ENCODE measurements at regions of chr12 and their contacts with region 1.

Region 1: DNA sequence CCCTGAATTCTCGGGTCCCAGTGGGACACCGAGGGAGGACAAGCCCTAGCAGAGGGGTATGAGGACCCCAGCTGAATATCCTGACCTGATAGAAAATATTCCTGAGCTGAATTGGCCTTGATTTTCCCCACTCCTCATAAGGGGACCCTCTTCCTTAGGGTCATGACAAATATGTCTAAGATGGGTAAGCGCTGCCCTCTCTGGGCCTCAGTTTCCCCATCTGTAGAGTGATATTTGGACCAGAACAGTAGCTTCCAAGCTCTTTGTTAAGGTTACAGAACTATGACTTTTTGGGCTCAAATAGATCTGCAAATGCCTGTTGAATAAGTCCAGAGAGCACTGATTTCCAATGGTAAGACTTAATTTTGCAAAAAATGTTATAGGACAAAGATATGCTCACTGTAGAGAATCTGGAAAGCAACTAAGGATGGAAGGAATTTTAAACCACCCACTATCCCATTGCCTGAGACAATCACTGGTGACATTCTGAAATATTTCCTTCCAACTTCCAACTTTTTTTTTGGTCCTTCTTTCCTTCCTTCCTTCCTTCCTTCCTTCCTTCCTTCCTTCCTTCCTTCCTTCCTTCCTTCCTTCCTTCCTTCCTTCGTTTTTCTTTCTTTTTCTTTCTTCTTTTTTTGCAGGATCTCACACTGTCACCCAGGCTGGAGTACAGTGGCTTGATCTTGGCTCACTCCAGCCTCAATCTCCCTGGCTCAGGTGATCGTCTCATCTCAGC is 32.0 kb downstream of the MYL2 start:
- DNase-seq: no peak
- H3K4me3 ChIP-seq: no peak overlapping the region
- H3K27ac ChIP-seq: no peak overlapping the region
- H3K4me1 ChIP-seq: peaks cover 9% of the 10 kb centered on the region
- H3K27me3 ChIP-seq: no peaks in the 10 kb centered on the region
- CTCF ChIP-seq: no peak

Region 2: GRCh38 chr12:110513842-110514241 is 374.6 kb before region 1 on chr12:
- CTCF ChIA-PET with region 1: no interaction called
- dilution Hi-C with region 1: no loop called
- in situ Hi-C with region 1: no loop called
- intact Hi-C with region 1: loop called (anchors 10 kb)
- DNase-seq: no peak
- H3K4me3 ChIP-seq: no peak overlapping the region
- H3K27ac ChIP-seq: no peak overlapping the region
- H3K4me1 ChIP-seq: no peaks in the 10 kb centered on the region
- H3K27me3 ChIP-seq: no peaks in the 10 kb centered on the region
- CTCF ChIP-seq: no peak

Region 3: GRCh38 chr12:110704748-110705147 is 183.7 kb before region 1 on chr12:
- CTCF ChIA-PET with region 1: interaction called, 6 read pairs
- dilution Hi-C with region 1: no loop called
- in situ Hi-C with region 1: no loop called
- intact Hi-C with region 1: loop called (anchors 1 kb)
- DNase-seq: peak; percentile 24
- H3K4me3 ChIP-seq: no peak overlapping the region
- H3K27ac ChIP-seq: no peak overlapping the region
- H3K4me1 ChIP-seq: no peaks in the 10 kb centered on the region
- H3K27me3 ChIP-seq: no peaks in the 10 kb centered on the region
- CTCF ChIP-seq: peak; percentile 39 to 75

Region 4: GRCh38 chr12:110742718-110743570 is 145.5 kb before region 1 on chr12 and contains the start of gene PPP1CC:
- CTCF ChIA-PET with region 1: interaction called, 6 read pairs
- dilution Hi-C with region 1: no loop called
- in situ Hi-C with region 1: no loop called
- intact Hi-C with region 1: loop called (anchors 2 kb)
- DNase-seq: peak; percentile 90
- H3K4me3 ChIP-seq: peak within 1 kb of the TSS; percentile 69 to 85 (median 79)
- H3K27ac ChIP-seq: peak within 1 kb of the TSS; percentile 71
- H3K4me1 ChIP-seq: peaks cover 35% of the 10 kb centered on the region
- H3K27me3 ChIP-seq: no peaks in the 10 kb centered on the region
- CTCF ChIP-seq: no peak
- total RNA-seq, gene PPP1CC: 91.0 to 116 TPM

Region 5: DNA sequence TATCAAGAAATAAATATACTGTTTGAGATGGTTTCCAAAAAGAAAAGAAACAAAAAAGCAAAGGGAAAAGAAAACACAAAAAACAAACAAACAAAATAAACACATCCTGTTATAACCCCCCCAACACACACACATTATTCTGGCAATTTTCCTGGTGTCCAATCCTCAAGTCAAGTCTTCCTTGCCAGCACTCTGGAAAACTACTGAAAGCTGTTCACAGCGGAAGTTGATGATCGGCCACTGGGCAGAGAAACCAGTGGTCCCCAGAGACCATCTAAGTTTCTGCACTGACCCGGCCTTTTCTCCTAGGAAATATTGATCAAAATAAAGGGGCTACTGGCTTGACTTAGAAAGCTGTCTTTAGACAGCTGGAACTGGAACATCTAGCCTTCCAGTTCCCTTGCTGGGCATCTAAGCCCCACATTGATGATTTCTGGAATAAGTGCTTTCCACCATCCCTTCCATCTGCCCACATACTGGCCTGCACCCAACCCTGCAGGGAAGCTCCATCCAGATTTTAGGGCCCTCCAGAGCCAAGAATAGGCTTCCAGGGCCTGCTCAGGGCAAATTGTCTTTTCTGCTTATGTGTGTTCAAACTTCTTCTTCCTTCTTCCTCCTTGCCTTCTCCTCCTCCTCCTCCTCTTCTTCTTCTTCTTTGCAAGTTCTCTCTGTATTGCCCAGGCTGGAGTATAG is 134.2 kb before region 1 on chr12:
- CTCF ChIA-PET with region 1: no interaction called
- dilution Hi-C with region 1: no loop called
- in situ Hi-C with region 1: no loop called
- intact Hi-C with region 1: no loop called
- DNase-seq: no peak
- H3K4me3 ChIP-seq: no peak overlapping the region
- H3K27ac ChIP-seq: no peak overlapping the region
- H3K4me1 ChIP-seq: no peaks in the 10 kb centered on the region
- H3K27me3 ChIP-seq: no peaks in the 10 kb centered on the region
- CTCF ChIP-seq: no peak